Activated CD8-positive, alpha-beta T cell treated with anti-CD3 and anti-CD28 coated beads, Interleukin-2, amount 10 ng/mL, durations not matched to agents 7 days and 5 days (primary cell): ENCODE measurements at regions of chr17 and their contacts with region 1.

Region 1: GRCh38 chr17:75154195-75155106 is at the start of gene JPT1:
- DNase-seq: peak; percentile 99
- ATAC-seq: peak; percentile 96
- H3K4me3 Mint-ChIP-seq: peak within 1 kb of the TSS; percentile 96
- H3K27ac Mint-ChIP-seq: peak within 1 kb of the TSS; percentile 92
- H3K4me1 Mint-ChIP-seq: peaks cover 36% of the 10 kb centered on the region
- H3K27me3 Mint-ChIP-seq: no peaks in the 10 kb centered on the region
- total RNA-seq, gene JPT1: 301 to 319 TPM

Region 2: DNA sequence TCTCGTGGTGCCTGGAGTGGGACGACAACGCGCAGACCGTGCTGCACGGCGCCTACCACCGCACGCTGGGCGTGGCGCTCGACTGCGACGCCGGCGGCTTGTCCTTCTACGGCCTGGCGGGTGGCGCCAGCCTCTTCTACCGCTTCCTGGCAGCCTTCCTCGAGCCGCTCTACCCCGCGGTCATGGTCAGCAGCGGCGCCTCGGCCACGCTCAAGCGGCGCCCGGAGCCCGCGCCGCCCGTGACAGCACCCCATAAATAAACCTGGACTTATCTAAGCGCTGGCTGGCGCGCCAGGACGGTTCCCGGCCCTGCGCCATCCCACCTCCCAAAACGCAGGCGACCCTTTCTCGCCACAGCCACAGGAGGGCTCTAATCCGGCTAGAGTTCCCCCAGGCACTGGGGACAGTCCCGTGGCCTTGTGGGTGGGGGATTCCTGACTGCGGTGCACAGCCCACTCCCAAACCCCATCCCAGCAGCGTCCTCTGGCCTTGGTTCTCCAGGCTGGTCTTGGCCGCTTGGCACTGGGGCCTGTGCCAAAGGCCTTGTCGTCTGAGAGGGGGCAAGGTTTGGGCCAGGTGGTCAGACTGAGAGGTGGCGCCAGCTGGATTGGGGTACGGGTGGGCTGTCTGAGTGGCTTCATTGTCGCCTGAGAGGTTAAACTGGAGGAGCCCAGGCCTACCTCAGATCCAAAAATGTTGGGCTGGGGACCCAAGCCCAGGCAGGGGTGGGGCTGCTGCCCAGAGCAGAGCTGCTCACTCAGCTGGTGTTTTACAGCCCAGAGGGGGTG is 76.8 kb before region 1 on chr17:
- CTCF ChIA-PET with region 1: no interaction called
- POLR2A ChIA-PET with region 1: no interaction called
- DNase-seq: peak; percentile 54
- ATAC-seq: peak; percentile 86
- H3K4me3 Mint-ChIP-seq: peak overlapping the region; percentile 48
- H3K27ac Mint-ChIP-seq: peak overlapping the region; percentile 52
- H3K4me1 Mint-ChIP-seq: peaks cover 25% of the 10 kb centered on the region
- H3K27me3 Mint-ChIP-seq: peaks cover 3% of the 10 kb centered on the region

Region 3: DNA sequence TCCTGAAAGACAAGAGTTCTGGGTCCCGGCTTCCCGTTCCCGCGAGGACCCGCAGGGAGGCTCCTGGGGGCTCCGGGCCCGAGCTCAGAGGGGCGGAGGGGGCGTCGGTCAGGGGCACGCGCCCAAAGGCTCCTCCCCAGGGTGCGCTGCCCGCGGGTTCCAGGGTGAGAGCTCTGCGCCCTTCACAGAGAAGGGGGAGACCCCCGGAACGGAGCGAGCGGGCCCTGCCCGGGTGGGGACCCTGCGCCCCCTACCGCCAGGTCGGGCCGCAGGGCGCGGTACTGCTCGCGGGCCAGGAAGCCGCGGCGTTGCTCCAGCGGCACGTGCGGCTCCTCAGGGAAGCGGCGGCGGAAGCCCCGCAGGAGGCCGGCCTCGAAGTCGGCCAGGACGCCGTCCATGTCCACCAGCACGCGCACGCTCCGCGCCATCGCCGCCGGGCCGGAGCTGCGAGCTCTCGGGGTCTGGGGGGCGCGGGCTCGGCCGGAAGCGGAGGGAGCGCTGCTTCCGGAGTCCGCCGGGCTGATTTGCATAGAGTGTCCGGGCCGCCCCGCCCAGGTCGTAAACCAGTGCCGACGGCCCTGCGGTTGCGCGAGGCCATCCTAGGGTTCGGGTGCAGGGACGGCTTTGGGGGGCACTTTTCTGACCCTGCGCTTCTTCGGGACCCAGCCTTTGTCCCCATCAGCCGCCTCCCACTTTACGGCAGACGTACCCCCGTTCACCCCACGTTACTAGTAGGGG is 23.0 kb before region 1 on chr17 and contains the start of gene NT5C:
- CTCF ChIA-PET with region 1: interaction called, 3 read pairs
- POLR2A ChIA-PET with region 1: interaction called, 11 read pairs
- DNase-seq: peak; percentile 77
- ATAC-seq: peak; percentile 78
- H3K4me3 Mint-ChIP-seq: peak within 1 kb of the TSS; percentile 87
- H3K27ac Mint-ChIP-seq: peak within 1 kb of the TSS; percentile 88
- H3K4me1 Mint-ChIP-seq: peaks cover 27% of the 10 kb centered on the region
- H3K27me3 Mint-ChIP-seq: no peaks in the 10 kb centered on the region
- total RNA-seq, gene NT5C: 68.5 to 68.8 TPM

Region 4: GRCh38 chr17:75142239-75142971 is 12.0 kb before region 1 on chr17:
- CTCF ChIA-PET with region 1: interaction called, 3 read pairs
- POLR2A ChIA-PET with region 1: interaction called, 11 read pairs
- DNase-seq: no peak
- ATAC-seq: no peak
- H3K4me3 Mint-ChIP-seq: no peak overlapping the region
- H3K27ac Mint-ChIP-seq: no peak overlapping the region
- H3K4me1 Mint-ChIP-seq: peaks cover 27% of the 10 kb centered on the region
- H3K27me3 Mint-ChIP-seq: no peaks in the 10 kb centered on the region

Region 5: DNA sequence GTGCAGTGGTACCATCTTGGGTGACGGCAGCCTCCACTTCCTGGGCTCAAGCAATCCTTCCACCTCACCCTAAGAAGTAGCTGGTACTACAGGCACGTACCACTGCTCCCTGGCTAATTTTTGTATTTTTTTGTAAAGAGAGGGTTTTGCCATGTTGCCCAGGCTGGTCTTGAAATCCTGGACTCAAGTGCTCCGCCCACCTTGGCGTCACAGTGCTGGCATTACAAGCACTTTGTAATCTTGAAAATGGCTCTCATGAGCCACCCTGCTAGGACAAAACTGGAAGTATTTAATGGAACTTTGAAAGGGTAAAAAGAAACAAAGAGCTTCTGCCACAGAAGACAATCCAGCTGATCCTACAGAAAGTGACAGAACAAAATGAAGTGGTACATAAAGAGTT is 19.1 kb after region 1 on chr17:
- CTCF ChIA-PET with region 1: interaction called, 6 read pairs
- POLR2A ChIA-PET with region 1: interaction called, 11 read pairs
- DNase-seq: no peak
- ATAC-seq: no peak
- H3K4me3 Mint-ChIP-seq: no peak overlapping the region
- H3K27ac Mint-ChIP-seq: peak overlapping the region; percentile 28
- H3K4me1 Mint-ChIP-seq: peaks cover 21% of the 10 kb centered on the region
- H3K27me3 Mint-ChIP-seq: no peaks in the 10 kb centered on the region